Endothelial cell of umbilical vein (primary cell): ENCODE measurements at regions of chr19 and their contacts with region 1.

Region 1: DNA sequence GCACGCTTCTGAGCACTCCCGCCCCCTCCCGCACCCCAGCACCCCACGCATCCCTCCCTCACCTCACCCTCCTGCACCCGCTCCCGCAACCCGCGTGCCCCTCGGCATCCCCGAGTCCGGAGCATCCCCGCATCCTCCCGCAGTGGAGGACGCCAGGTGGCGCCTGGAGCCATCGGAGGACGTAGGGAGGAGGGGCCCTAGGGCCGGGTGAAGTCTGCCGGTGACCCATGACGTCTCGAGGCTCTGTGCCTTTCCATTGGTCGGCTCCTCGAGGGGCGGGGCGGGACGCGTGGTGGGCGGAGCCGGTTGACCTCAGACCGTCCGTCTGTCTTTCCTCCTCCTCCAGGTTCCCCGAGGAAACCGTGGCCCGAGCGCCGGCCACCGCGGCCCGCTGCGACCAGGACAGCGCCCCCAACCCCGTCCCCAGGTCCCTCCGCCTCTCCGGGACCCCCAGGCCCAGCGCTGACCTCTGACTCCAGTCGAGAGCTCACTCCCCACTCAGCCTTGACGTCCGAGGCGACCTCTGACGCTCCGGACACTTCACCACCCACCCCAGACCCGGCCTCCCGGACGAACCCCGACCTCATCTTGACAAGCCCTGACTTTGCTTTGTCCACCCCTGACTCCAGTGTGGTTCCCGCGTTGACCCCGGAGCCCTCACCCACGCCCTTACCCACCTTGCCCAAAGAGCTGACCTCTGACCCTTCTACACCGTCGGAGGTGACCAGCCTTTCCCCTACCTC is 19.9 kb downstream of the SBK2 start:
- DNase-seq: peak; percentile 89
- H3K4me3 ChIP-seq: peak overlapping the region in 2 of 3 experiments; percentile 15 to 40
- H3K27ac ChIP-seq: no peak overlapping the region
- H3K4me1 ChIP-seq: no peaks in the 10 kb centered on the region
- H3K27me3 ChIP-seq: no peaks in the 10 kb centered on the region
- CTCF ChIP-seq: peak; percentile 76 to 95
- POLR2A ChIP-seq: peak; percentile 17

Region 2: DNA sequence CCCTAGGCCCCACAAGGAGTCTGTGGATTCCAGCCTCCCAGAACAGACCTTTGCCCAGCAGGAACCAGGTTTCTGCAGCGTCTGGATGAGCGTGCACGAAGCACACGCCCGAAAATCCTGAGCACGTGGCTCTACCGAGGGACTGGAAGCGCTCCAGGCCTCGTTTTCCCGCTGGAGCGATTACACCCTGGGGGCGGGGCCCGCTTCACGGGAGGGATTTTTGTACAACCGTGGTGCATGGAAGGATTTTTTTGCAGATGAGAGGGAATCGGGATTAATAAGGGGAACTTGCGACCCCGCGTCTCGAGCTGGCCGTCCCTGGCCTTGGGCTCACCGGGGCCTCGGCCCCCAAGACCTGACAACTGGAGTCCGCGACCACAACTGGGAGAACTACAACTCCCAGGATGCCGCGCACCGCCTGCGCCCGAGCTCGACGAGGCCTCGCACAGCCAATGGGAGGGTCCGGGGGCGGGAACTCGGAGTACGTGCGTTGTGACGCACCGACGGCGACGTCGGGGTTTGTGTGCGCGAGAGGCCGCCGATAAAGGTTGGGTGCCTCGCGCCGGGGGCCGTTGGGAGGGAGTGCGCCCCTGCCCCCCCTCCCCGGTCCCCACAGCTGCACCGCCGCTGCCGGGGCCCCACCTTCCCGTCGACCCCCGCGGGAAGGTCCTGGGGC is 40.8 kb before region 1 on chr19 and contains the start of gene ZNF628:
- CTCF ChIA-PET with region 1: no interaction called
- POLR2A ChIA-PET with region 1: no interaction called
- dilution Hi-C with region 1: no loop called
- intact Hi-C with region 1: no loop called
- DNase-seq: peak; percentile 97
- H3K4me3 ChIP-seq: peak within 1 kb of the TSS; percentile 63 to 95 (median 95)
- H3K27ac ChIP-seq: peak within 1 kb of the TSS; percentile 66
- H3K4me1 ChIP-seq: peaks cover 10% of the 10 kb centered on the region
- H3K27me3 ChIP-seq: no peaks in the 10 kb centered on the region
- CTCF ChIP-seq: no peak
- POLR2A ChIP-seq: peak; percentile 28
- total RNA-seq, gene ZNF628: 9.0 and 10.4 TPM in 2 replicates

Region 3: DNA sequence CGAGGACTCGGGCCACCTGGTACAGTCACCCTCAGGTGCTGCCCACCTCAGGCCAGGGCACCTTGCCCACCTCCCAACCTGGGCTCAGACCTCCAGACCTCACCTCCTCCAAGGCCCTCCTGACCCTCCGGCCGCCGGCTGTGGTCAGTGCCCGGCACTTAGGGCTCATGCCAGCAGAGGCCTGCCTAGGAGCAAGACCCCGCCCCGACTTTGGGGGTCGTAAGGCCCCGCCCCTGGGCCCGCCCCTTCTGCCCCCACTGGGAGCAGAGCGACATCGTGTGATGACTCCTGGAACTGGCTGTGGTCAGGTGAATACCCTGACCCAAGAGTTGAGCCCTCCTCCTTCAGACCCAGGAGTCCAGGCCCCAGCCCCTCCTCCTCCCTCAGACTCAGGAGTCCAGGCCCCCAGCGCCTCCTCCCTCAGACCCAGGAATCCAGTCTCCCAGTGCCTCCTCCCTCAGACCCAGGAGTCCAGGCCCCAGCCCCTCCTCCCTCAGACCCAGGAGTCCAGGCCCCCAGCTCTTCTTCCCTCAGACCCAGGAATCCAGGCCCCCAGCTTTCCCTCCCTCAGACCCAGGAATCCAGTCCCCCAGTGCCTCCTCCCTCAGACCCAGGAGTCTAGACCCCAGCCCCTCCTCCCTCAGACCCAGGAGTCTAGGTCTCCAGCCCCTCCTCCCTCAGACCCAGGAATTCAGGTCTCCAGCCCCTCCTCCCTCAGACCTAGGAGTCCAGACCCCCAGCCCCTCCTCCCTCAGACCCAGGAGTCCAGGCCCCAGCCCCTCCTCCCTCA is 20.1 kb after region 1 on chr19 and contains the start of gene SBK2:
- CTCF ChIA-PET with region 1: interaction called, 4 read pairs
- POLR2A ChIA-PET with region 1: interaction called, 4 read pairs
- dilution Hi-C with region 1: no loop called
- intact Hi-C with region 1: loop called (anchors 1 kb)
- DNase-seq: no peak
- H3K4me3 ChIP-seq: no peak within 1 kb of the TSS
- H3K27ac ChIP-seq: no peak within 1 kb of the TSS
- H3K4me1 ChIP-seq: no peaks in the 10 kb centered on the region
- H3K27me3 ChIP-seq: no peaks in the 10 kb centered on the region
- CTCF ChIP-seq: peak in 1 of 2 donors; percentile 43
- POLR2A ChIP-seq: no peak
- total RNA-seq, gene SBK2: not detected in 2 replicates

Region 4: GRCh38 chr19:55549500-55550320 is 32.7 kb after region 1 on chr19:
- CTCF ChIA-PET with region 1: interaction called, 6 read pairs
- POLR2A ChIA-PET with region 1: no interaction called
- dilution Hi-C with region 1: no loop called
- intact Hi-C with region 1: loop called (anchors 1 kb)
- DNase-seq: peak; percentile 86
- H3K4me3 ChIP-seq: peak overlapping the region in 2 of 3 experiments; percentile 21 to 26
- H3K27ac ChIP-seq: peak overlapping the region; percentile 96
- H3K4me1 ChIP-seq: peaks cover 33% of the 10 kb centered on the region
- H3K27me3 ChIP-seq: peaks cover 0 to 3% of the 10 kb centered on the region in 2 experiments
- CTCF ChIP-seq: peak in 1 of 2 donors; percentile 13
- POLR2A ChIP-seq: no peak

Region 5: DNA sequence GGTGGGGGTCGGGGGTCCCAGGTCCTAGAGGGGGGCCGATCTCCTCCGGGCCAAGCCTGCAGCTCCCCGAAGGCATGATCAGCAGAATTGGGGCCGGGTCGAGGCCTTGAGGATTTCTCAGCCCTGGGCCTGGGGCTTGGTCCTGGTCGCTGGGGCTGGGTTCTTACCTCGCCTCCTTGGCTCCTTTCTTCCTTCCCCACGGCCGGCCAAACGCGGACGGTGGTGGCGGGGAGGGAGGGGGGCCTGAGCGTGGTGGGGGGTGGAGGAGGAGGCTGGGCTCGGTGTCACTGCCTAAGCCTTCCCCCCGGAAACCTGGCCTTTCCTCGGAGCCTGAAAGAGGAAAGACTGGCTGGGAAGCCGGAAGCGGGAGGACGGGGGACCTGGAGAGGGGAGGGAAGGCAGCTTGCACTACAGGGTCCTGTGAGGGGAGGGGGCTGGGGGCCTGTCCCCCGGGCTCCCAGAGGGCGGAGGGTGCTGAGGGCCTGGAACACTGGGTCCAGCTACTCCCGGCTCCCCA is 63.6 kb after region 1 on chr19 and contains the start of gene ZNF579:
- CTCF ChIA-PET with region 1: interaction called, 5 read pairs
- POLR2A ChIA-PET with region 1: no interaction called
- dilution Hi-C with region 1: no loop called
- intact Hi-C with region 1: loop called (anchors 1 kb)
- DNase-seq: peak; percentile 81
- H3K4me3 ChIP-seq: peak within 1 kb of the TSS; percentile 62 to 98 (median 84)
- H3K27ac ChIP-seq: peak within 1 kb of the TSS; percentile 59
- H3K4me1 ChIP-seq: peaks cover 4% of the 10 kb centered on the region
- H3K27me3 ChIP-seq: peaks cover 4 to 7% of the 10 kb centered on the region in 2 experiments
- CTCF ChIP-seq: no peak
- POLR2A ChIP-seq: peak; percentile 17
- total RNA-seq, gene ZNF579: 15.7 and 15.9 TPM in 2 replicates

Region 6: DNA sequence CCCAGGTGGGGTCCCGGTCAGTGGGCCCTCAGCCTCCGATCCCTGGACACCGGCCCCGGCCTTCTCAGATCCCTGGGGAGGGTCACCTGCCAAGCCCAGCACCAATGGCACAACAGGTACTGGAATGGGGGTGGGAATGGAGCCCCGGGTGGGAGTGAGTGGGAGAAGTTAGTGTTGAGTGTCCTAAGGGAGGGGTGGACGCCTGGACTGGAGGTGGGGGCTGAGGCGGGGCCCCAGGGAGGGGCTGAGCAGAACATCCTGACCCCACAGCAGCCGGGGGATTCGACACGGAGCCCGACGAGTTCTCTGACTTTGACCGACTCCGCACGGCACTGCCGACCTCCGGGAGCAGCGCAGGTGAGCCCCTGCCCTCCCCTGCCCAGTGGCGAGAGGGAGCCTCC is 175.6 kb after region 1 on chr19:
- CTCF ChIA-PET with region 1: no interaction called
- POLR2A ChIA-PET with region 1: no interaction called
- dilution Hi-C with region 1: no loop called
- intact Hi-C with region 1: no loop called
- DNase-seq: no peak
- H3K4me3 ChIP-seq: no peak overlapping the region
- H3K27ac ChIP-seq: no peak overlapping the region
- H3K4me1 ChIP-seq: no peaks in the 10 kb centered on the region
- H3K27me3 ChIP-seq: no peaks in the 10 kb centered on the region
- CTCF ChIP-seq: no peak
- POLR2A ChIP-seq: no peak